GM10248 (cell line): ENCODE measurements at regions of chr2 and their contacts with region 1.

Region 1: GRCh38 chr2:197191177-197191939 is 119.2 kb downstream of the ANKRD44 start:
- DNase-seq: peak; percentile 43
- CTCF ChIP-seq: peak; percentile 49

Region 2: GRCh38 chr2:197174539-197175094 is 16.7 kb before region 1 on chr2:
- CTCF ChIA-PET with region 1: interaction called, 32 read pairs
- POLR2A ChIA-PET with region 1: no interaction called
- DNase-seq: no peak
- CTCF ChIP-seq: no peak

Region 3: GRCh38 chr2:197179744-197180498 is 11.4 kb before region 1 on chr2:
- CTCF ChIA-PET with region 1: interaction called, 32 read pairs
- POLR2A ChIA-PET with region 1: no interaction called
- DNase-seq: no peak
- CTCF ChIP-seq: no peak

Region 4: GRCh38 chr2:197209742-197210408 is 18.5 kb after region 1 on chr2:
- CTCF ChIA-PET with region 1: interaction called, 54 read pairs
- POLR2A ChIA-PET with region 1: no interaction called
- DNase-seq: peak; percentile 35
- CTCF ChIP-seq: no peak

Region 5: DNA sequence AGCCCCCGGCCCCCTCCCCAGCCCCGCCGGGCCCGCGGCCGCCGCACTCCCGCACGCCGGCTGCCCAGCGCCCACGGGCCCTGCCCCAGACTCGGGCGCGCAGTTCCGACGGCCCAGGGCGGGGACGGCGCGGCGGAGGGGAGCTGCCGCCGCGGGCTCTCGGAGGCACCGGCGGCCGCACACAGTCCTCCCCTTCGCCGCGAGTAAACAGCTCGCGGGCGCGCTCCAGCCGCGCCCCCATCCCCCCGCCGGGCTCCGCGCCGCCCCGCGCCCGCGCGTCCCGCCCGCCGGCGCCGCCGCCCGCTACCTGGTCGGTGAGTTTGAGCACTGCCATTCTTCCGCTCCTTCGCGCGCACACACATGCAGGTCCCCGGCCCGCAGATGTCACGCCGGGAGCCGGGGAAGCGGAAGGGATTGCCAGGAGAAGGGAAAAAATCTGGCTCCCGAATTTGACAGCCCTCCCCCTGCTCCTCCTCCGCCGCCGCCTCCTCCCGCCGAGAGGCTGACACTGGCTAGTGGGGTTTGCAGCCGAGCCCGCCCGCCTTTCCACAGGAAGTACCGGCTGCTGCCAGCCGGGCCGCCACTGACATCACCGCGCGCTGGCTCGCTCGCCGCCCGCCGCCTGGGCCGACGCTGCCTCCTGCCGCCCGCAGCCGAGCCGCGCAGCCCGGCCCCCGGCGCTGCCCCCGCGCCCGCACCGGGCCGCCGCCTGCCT is 119.1 kb after region 1 on chr2 and contains the start of gene ANKRD44:
- CTCF ChIA-PET with region 1: interaction called, 32 read pairs
- POLR2A ChIA-PET with region 1: no interaction called
- DNase-seq: peak; percentile 88
- CTCF ChIP-seq: peak; percentile 77

Region 6: GRCh38 chr2:197378494-197379307 is 187.3 kb after region 1 on chr2:
- CTCF ChIA-PET with region 1: interaction called, 18 read pairs
- POLR2A ChIA-PET with region 1: no interaction called
- DNase-seq: peak; percentile 70
- CTCF ChIP-seq: peak; percentile 72